SK-N-SH (cell line): ENCODE measurements at regions of chr13 and their contacts with region 1.

Region 1: GRCh38 chr13:97359181-97360057 is 74.5 kb upstream of the RAP2A start:
- DNase-seq: peak; percentile 66
- H3K4me3 ChIP-seq: no peak overlapping the region
- H3K27ac ChIP-seq: peak overlapping the region in 1 of 2 experiments; percentile 31; a peak in 2 of 4 replicates
- H3K4me1 ChIP-seq: peaks cover 0 to 4% of the 10 kb centered on the region in 2 experiments; a peak in 1 of 4 replicates
- H3K27me3 ChIP-seq: no peaks in the 10 kb centered on the region
- CTCF ChIP-seq: peak; percentile 92
- EP300 ChIP-seq: no peak
- RAD21 ChIP-seq: peak; percentile 89

Region 2: GRCh38 chr13:97018029-97018831 is 341.2 kb before region 1 on chr13:
- CTCF ChIA-PET with region 1: interaction called, 16 read pairs
- POLR2A ChIA-PET with region 1: no interaction called
- DNase-seq: peak; percentile 41
- H3K4me3 ChIP-seq: no peak overlapping the region; a peak in 1 of 4 replicates
- H3K27ac ChIP-seq: no peak overlapping the region
- H3K4me1 ChIP-seq: peaks cover 0 to 2% of the 10 kb centered on the region in 2 experiments; a peak in 1 of 4 replicates
- H3K27me3 ChIP-seq: no peaks in the 10 kb centered on the region; the same call in 1 of the 2 replicates
- CTCF ChIP-seq: peak; percentile 93
- EP300 ChIP-seq: no peak
- RAD21 ChIP-seq: peak; percentile 74

Region 3: DNA sequence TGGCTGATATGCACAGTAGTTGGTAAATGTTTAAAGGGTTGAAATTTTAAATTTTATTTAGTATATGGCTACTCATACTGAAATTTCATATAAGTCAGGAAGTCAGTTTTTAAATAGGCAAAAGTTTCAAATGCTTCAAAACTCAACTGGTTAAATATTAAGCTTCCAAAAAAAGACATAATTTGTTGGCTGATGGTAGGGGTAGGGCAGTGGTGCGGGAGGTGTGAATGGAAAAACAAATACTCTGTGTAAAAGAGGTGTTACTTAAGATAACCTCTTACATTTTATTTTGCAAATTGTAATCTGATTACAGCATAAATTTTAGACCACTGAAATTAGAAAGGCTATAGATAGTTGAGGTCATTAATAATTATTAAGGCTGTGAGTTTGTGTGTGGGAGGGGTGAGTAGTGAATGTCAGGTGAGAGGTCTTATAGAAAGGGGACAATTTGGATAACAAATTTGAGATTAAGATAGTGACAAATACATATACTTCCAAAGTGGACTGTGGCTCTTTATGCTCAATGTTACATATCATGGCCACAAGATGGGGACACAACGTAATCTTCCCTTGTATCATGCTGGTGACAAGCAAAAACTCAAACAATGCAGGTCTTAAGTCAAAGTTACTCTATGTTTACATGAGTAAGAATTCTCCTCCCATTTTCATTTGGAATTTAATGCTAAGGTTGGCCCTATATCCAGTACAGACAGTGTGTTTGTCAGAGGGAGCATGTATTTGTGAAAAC is 328.5 kb before region 1 on chr13:
- CTCF ChIA-PET with region 1: interaction called, 17 read pairs
- POLR2A ChIA-PET with region 1: no interaction called
- DNase-seq: peak; percentile 47
- H3K4me3 ChIP-seq: no peak overlapping the region
- H3K27ac ChIP-seq: no peak overlapping the region
- H3K4me1 ChIP-seq: no peaks in the 10 kb centered on the region
- H3K27me3 ChIP-seq: no peaks in the 10 kb centered on the region
- CTCF ChIP-seq: peak; percentile 58
- EP300 ChIP-seq: no peak
- RAD21 ChIP-seq: peak; percentile 82

Region 4: DNA sequence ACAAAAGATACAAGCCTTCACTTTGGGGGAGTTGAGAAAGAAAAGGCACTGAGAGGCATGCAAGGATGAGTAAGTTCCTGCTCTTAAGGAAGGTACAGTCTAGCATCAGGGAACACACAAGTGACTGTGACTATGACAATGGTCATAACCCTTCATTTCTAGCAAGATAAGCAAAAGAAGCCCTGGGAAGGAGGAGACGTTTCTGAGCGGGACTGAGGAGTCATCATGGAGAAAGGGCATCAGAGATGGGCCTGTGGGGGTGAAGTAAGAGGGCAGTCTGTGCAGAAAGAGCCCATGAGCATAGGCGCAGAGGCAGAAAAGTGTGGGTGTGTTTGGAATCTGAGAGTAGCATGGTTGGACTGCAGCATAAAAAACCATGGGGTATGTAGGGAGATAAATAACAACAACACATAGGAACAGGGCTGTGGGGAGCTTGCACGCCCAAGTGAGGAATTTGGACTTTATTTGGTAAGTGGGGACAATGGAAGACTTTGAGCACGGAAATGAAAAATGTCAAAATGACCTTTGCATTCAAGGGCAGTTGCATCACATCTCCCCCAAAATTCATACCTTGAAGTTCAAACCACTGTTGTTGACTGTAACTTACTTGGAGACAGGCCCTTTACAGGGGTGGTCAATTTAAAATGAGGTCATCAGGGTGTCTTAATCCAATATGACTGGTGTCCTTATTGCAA is 50.5 kb before region 1 on chr13:
- CTCF ChIA-PET with region 1: interaction called, 11 read pairs
- POLR2A ChIA-PET with region 1: no interaction called
- DNase-seq: no peak
- H3K4me3 ChIP-seq: no peak overlapping the region
- H3K27ac ChIP-seq: peak overlapping the region; percentile 88 to 94
- H3K4me1 ChIP-seq: peaks cover 29 to 45% of the 10 kb centered on the region in 2 experiments
- H3K27me3 ChIP-seq: no peaks in the 10 kb centered on the region
- CTCF ChIP-seq: no peak
- EP300 ChIP-seq: no peak
- RAD21 ChIP-seq: no peak

Region 5: DNA sequence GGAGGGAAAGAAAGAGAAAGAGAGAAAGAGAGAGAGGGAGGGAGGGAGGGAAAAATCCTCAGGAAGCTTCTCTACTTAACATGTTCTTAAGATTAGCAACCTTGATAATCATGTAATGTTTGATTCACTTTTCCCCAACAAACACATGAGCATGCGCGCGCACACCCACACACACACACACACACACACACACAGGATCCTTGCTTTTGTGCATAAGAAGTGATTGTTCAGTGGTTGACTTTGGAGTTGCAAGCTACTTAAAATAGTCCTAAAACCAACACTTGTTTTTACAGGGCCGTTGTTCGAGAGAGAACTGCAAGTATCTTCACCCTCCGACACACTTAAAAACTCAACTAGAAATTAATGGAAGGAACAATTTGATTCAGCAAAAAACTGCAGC is 25.4 kb before region 1 on chr13:
- CTCF ChIA-PET with region 1: no interaction called
- POLR2A ChIA-PET with region 1: no interaction called
- DNase-seq: no peak
- H3K4me3 ChIP-seq: no peak overlapping the region
- H3K27ac ChIP-seq: peak overlapping the region; percentile 6 to 61; a peak in 1 of 4 replicates
- H3K4me1 ChIP-seq: peaks cover under 1 to 22% of the 10 kb centered on the region in 2 experiments; a peak in 2 of 4 replicates
- H3K27me3 ChIP-seq: no peaks in the 10 kb centered on the region
- CTCF ChIP-seq: 0 out of 2 replicates have a peak, but pooled peaks have one; percentile 10
- EP300 ChIP-seq: no peak
- RAD21 ChIP-seq: no peak

Region 6: DNA sequence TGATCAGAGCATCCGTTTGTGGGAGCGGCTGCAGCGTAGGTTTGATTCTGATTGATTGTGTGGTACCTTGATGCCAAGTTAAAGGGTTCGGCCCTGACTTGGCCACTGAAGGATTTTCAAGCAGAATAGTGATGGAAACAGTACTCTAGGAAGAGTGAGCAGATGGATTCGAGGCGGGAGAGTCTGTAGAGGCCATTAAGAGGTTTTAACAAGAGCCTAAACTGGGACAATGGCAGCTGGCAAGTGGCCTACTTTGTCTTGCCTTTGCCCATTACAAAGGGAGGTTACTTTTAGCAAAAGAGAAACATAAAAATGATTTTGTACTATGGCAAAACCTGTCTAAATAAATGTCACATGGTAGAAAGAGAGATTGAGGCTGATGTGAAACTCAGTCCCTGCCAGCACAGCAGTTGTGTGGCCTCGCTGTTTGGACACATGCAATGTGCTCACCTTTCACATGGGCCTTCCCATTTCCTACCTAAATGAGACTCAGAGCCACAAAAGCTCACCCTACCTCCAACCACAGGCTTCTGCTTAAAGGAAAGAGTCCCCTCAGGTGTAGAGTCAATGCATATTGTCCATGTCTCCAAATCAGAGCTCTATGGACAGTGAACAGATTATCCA is 12.2 kb after region 1 on chr13:
- CTCF ChIA-PET with region 1: interaction called, 11 read pairs
- POLR2A ChIA-PET with region 1: no interaction called
- DNase-seq: no peak
- H3K4me3 ChIP-seq: no peak overlapping the region
- H3K27ac ChIP-seq: no peak overlapping the region; a peak in 1 of 4 replicates
- H3K4me1 ChIP-seq: no peaks in the 10 kb centered on the region; a peak in 1 of 4 replicates
- H3K27me3 ChIP-seq: no peaks in the 10 kb centered on the region
- CTCF ChIP-seq: no peak
- EP300 ChIP-seq: no peak
- RAD21 ChIP-seq: no peak

Region 7: DNA sequence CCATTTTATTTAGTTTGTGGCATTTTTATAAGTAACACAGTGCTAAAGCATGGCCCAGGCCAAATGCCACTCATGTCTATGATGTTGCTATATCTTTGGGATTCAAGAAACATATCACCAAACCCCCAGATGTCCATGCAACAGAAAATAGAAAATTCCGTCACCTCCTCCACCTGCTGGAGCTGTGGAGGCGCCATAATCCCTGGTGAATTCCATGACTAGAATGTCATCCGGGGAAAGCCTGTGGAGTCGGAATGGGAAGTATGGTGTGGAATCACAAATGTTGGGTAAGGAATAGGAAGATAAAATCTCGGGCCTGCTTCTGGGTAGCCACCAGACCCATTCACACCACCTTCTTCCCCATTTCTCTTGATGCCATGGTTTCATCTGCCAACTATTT is 22.9 kb after region 1 on chr13:
- CTCF ChIA-PET with region 1: no interaction called
- POLR2A ChIA-PET with region 1: no interaction called
- DNase-seq: no peak
- H3K4me3 ChIP-seq: no peak overlapping the region
- H3K27ac ChIP-seq: no peak overlapping the region
- H3K4me1 ChIP-seq: peaks cover 2 to 9% of the 10 kb centered on the region in 2 experiments; a peak in 2 of 4 replicates
- H3K27me3 ChIP-seq: no peaks in the 10 kb centered on the region
- CTCF ChIP-seq: no peak
- EP300 ChIP-seq: no peak
- RAD21 ChIP-seq: no peak

Region 8: DNA sequence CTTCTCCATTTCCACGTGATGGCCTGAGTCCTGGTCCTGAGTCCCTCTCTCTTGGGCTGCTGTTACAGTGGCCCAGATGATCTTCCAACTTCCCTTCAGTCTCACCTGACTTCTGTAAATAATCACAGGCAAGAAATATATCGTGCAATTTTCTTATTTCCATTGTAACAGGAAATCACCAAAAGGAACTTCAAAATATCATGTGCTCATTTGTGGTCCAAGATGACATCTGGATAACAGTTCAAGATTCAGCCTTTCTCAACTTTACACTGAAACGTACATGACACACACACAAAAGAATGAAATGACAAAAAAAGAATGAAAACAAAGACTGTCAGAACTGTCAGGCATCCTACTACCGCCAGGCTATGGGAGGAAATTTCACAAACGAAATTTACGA is 52.6 kb after region 1 on chr13:
- CTCF ChIA-PET with region 1: no interaction called
- POLR2A ChIA-PET with region 1: no interaction called
- DNase-seq: no peak
- H3K4me3 ChIP-seq: no peak overlapping the region
- H3K27ac ChIP-seq: no peak overlapping the region
- H3K4me1 ChIP-seq: no peaks in the 10 kb centered on the region
- H3K27me3 ChIP-seq: no peaks in the 10 kb centered on the region
- CTCF ChIP-seq: no peak
- EP300 ChIP-seq: no peak
- RAD21 ChIP-seq: no peak